HCT116 (cell line): ENCODE measurements at regions of chr12 and their contacts with region 1.

Region 1: GRCh38 chr12:75087654-75088053 is 122.0 kb downstream of the KCNC2 start:
- DNase-seq: peak; percentile 13
- ATAC-seq: peak; percentile 86
- H3K4me3 ChIP-seq: no peak overlapping the region
- H3K27ac ChIP-seq: no peak overlapping the region
- H3K4me1 ChIP-seq: no peaks in the 10 kb centered on the region
- H3K27me3 ChIP-seq: no peaks in the 10 kb centered on the region
- CTCF ChIP-seq: peak; percentile 37 to 58 (median 37); a peak in 3 of 6 replicates
- POLR2A ChIP-seq: no peak
- RAD21 ChIP-seq: peak; percentile 69

Region 2: GRCh38 chr12:73625226-73625625 is 1462.4 kb before region 1 on chr12:
- CTCF ChIA-PET with region 1: no interaction called
- POLR2A ChIA-PET with region 1: no interaction called
- RAD21 ChIA-PET with region 1: no interaction called
- intact Hi-C with region 1: no loop called
- DNase-seq: no peak
- ATAC-seq: no peak
- H3K4me3 ChIP-seq: no peak overlapping the region
- H3K27ac ChIP-seq: no peak overlapping the region
- H3K4me1 ChIP-seq: no peaks in the 10 kb centered on the region
- H3K27me3 ChIP-seq: no peaks in the 10 kb centered on the region
- CTCF ChIP-seq: no peak
- POLR2A ChIP-seq: no peak
- RAD21 ChIP-seq: no peak

Region 3: DNA sequence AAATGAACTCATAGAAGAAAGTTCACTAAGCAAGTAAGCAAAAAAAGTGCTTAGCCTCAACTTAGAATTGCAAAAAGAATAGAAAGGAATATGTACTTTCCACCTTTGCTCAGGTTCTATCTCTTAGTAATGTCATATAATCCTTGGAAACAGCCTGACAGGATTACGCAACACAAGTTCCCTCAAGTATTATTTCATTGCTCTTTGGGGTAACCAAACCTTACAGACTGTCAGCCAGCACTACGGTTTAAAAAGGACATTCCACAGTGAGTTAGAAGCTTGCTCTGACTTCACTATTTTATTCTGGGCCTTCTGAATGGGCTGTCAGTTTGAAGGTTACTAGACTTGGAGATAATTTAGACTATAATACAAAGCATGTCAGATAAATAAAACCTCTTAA is 286.0 kb before region 1 on chr12:
- CTCF ChIA-PET with region 1: interaction called, 6 read pairs
- POLR2A ChIA-PET with region 1: no interaction called
- RAD21 ChIA-PET with region 1: interaction called in 1 of 2 experiments, 3 read pairs
- intact Hi-C with region 1: loop called (anchors 10 kb)
- DNase-seq: no peak
- ATAC-seq: no peak
- H3K4me3 ChIP-seq: no peak overlapping the region
- H3K27ac ChIP-seq: no peak overlapping the region
- H3K4me1 ChIP-seq: no peaks in the 10 kb centered on the region
- H3K27me3 ChIP-seq: no peaks in the 10 kb centered on the region
- CTCF ChIP-seq: no peak
- POLR2A ChIP-seq: no peak
- RAD21 ChIP-seq: no peak

Region 4: GRCh38 chr12:75020068-75020557 is 67.5 kb before region 1 on chr12:
- CTCF ChIA-PET with region 1: no interaction called
- POLR2A ChIA-PET with region 1: no interaction called
- RAD21 ChIA-PET with region 1: no interaction called
- intact Hi-C with region 1: no loop called
- DNase-seq: peak; percentile 10
- ATAC-seq: no peak
- H3K4me3 ChIP-seq: no peak overlapping the region
- H3K27ac ChIP-seq: no peak overlapping the region
- H3K4me1 ChIP-seq: no peaks in the 10 kb centered on the region
- H3K27me3 ChIP-seq: no peaks in the 10 kb centered on the region
- CTCF ChIP-seq: no peak
- POLR2A ChIP-seq: no peak
- RAD21 ChIP-seq: no peak

Region 5: GRCh38 chr12:75289753-75290152 is 202.1 kb after region 1 on chr12:
- CTCF ChIA-PET with region 1: no interaction called
- POLR2A ChIA-PET with region 1: no interaction called
- RAD21 ChIA-PET with region 1: no interaction called
- intact Hi-C with region 1: no loop called
- DNase-seq: peak; percentile 3
- ATAC-seq: no peak
- H3K4me3 ChIP-seq: no peak overlapping the region
- H3K27ac ChIP-seq: no peak overlapping the region
- H3K4me1 ChIP-seq: no peaks in the 10 kb centered on the region
- H3K27me3 ChIP-seq: no peaks in the 10 kb centered on the region
- CTCF ChIP-seq: peak; percentile 16 to 52 (median 37); a peak in 4 of 6 replicates
- POLR2A ChIP-seq: no peak
- RAD21 ChIP-seq: peak; percentile 69